ENCODE measurements at regions of chr7 and their contacts with region 1.

Region 1: DNA sequence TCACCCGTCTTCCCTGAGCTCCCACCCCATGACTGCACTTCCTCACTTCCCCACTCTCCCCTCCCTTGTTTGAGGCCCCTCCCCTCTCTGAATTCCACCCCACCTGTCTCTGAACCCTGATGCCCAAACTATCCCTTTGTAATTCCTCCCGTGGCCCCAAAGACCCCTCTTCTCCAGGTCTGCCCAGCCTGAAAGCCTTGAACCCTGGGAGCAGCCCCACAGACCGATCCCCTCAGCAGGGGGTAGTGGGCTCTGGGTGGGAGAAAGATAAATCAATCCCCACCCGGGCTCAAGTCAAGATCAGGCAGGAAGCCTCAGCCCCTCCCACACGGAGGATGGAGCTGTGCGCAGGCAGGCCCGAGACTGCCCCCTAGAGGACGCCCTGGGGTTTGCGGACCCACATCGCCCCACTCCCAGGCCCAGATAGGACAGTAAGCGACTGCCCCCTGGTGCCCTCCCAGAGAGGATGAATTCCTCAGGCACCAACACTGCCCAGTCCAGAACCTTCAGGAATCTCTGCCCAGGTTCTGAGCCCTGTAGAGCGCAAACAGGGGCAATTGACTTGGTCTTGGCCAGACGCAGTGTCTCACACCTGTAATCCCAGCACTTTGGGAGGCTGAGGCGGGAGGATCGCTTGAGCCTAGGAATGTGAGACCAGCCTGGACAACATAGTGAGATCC is 11.7 kb downstream of the HSPB1 start:
- DNase-seq: peak; percentile 94 to 97
- ATAC-seq: peak; percentile 68 to 86 (median 68)
- H3K4me3 ChIP-seq: no peak overlapping the region
- H3K4me3 Mint-ChIP-seq: peak overlapping the region; percentile 35
- H3K27ac ChIP-seq: no peak overlapping the region
- H3K27ac Mint-ChIP-seq: peak overlapping the region in 1 of 2 donors; percentile 69
- H3K4me1 ChIP-seq: peaks cover 22% of the 10 kb centered on the region
- H3K4me1 Mint-ChIP-seq: peaks cover 22 to 28% of the 10 kb centered on the region in 2 donors
- H3K27me3 ChIP-seq: no peaks in the 10 kb centered on the region
- H3K27me3 Mint-ChIP-seq: no peaks in the 10 kb centered on the region
- CTCF ChIP-seq: peak; percentile 99

Region 2: GRCh38 chr7:76047811-76048667 is 266.1 kb before region 1 on chr7 and contains the starts of genes MDH2 and STYXL1:
- intact Hi-C with region 1: loop called (anchors 10 kb)
- DNase-seq: peak; percentile 86 to 93
- ATAC-seq: peak; percentile 90 to 96 (median 93)
- H3K4me3 ChIP-seq: peak within 1 kb of the TSS; percentile 100
- H3K4me3 Mint-ChIP-seq: peak within 1 kb of the TSS; percentile 96
- H3K27ac ChIP-seq: peak within 1 kb of the TSS; percentile 94
- H3K27ac Mint-ChIP-seq: peak within 1 kb of the TSS; percentile 92 to 98
- H3K4me1 ChIP-seq: peaks cover 35% of the 10 kb centered on the region
- H3K4me1 Mint-ChIP-seq: peaks cover 31 to 58% of the 10 kb centered on the region in 2 donors
- H3K27me3 ChIP-seq: no peaks in the 10 kb centered on the region
- H3K27me3 Mint-ChIP-seq: no peaks in the 10 kb centered on the region
- CTCF ChIP-seq: no peak
- total RNA-seq, gene MDH2: 75.9 to 95.0 (median 93.9) TPM
- total RNA-seq, gene STYXL1: 15.1 to 33.2 (median 18.8) TPM

Region 3: DNA sequence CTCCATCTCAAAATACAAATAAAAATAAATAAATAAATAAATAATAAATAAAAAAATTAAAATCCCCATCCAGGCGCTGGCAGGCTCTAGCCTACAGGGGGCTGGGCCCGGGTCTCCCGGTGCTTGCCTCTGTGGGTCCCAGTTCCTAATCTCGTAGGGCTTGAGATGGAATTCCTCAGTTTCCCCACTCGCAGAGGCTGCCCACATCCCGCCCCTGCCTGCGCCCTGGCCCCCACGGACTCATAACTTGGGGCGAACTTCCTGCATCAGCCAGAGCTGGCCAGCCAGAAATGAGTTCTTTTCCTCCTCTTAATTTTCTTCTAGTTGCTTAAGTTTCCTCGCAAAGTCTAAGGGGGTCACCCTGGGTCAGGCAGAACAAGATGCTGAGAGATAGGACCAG is 134.5 kb before region 1 on chr7:
- intact Hi-C with region 1: loop called (anchors 1 kb)
- DNase-seq: no peak
- ATAC-seq: no peak
- H3K4me3 ChIP-seq: no peak overlapping the region
- H3K4me3 Mint-ChIP-seq: no peak overlapping the region
- H3K27ac ChIP-seq: no peak overlapping the region
- H3K27ac Mint-ChIP-seq: no peak overlapping the region
- H3K4me1 ChIP-seq: peaks cover 9% of the 10 kb centered on the region
- H3K4me1 Mint-ChIP-seq: peaks cover 5 to 6% of the 10 kb centered on the region in 2 donors
- H3K27me3 ChIP-seq: no peaks in the 10 kb centered on the region
- H3K27me3 Mint-ChIP-seq: no peaks in the 10 kb centered on the region
- CTCF ChIP-seq: no peak

Region 4: DNA sequence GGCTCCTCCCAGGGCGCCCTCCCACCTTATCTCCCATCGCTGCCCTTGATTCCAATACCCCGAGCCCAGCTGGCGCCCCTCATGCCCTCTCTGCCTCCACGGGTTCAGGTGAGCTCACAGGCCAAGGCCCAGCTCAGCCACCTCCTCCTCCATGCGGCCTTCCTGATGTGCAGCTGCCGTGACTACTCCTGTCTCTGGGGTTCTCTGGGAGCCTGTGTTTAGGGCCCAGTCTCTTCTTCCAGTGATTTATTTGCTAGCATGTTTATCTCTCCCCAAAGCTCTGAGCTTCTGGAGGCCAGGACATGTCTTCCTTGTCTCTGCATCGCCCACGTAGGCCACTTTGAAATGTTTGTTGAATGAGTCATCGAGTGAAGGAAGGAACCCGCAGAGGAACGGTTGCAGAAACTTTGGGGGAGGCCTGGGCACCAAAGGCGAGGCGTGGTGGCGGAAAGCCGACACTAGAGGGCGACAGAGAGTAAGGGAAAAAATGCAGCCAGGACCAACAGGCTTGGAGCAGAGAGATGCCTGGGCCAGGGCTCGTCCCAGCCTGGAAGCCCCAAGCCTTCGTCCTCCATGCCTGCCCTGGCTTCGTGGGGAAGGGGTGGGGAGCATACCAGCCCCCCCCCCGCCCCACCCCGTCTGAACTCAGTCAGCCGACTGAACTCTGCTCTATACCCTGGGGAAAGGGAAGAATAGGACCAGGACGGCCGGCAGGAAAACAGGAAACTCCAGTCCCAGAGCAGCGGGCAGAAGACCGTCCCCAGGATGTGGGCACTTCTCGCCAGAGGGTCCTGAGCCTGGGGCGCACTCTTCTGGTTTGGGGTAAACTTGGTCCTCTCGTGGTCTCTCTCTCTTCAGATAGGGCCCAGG is 22.6 kb before region 1 on chr7:
- intact Hi-C with region 1: loop called (anchors 1 kb)
- DNase-seq: peak; percentile 78 to 91
- ATAC-seq: peak; percentile 86 to 97 (median 91)
- H3K4me3 ChIP-seq: no peak overlapping the region
- H3K4me3 Mint-ChIP-seq: no peak overlapping the region
- H3K27ac ChIP-seq: no peak overlapping the region
- H3K27ac Mint-ChIP-seq: peak overlapping the region in 1 of 2 donors; percentile 73
- H3K4me1 ChIP-seq: peaks cover 9% of the 10 kb centered on the region
- H3K4me1 Mint-ChIP-seq: peaks cover 5 to 7% of the 10 kb centered on the region in 2 donors
- H3K27me3 ChIP-seq: no peaks in the 10 kb centered on the region
- H3K27me3 Mint-ChIP-seq: peaks cover 0 to 5% of the 10 kb centered on the region in 2 donors
- CTCF ChIP-seq: peak; percentile 96

Region 5: DNA sequence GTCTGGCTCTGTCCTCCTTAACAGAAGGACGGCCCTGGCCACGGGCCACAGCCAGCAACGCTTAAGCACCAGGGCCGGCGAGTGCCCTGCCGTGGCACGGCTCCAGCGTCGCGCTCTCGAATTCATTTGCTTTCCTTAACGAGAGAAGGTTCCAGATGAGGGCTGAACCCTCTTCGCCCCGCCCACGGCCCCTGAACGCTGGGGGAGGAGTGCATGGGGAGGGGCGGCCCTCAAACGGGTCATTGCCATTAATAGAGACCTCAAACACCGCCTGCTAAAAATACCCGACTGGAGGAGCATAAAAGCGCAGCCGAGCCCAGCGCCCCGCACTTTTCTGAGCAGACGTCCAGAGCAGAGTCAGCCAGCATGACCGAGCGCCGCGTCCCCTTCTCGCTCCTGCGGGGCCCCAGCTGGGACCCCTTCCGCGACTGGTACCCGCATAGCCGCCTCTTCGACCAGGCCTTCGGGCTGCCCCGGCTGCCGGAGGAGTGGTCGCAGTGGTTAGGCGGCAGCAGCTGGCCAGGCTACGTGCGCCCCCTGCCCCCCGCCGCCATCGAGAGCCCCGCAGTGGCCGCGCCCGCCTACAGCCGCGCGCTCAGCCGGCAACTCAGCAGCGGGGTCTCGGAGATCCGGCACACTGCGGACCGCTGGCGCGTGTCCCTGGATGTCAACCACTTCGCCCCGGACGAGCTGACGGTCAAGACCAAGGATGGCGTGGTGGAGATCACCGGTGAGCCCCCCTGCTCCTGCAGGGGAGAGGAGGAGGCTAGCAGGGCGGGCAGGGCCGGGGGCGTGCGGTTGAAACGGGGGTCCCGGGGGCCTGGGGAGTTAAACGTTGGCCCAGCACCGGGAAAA is 11.6 kb before region 1 on chr7 and contains the start of gene HSPB1:
- intact Hi-C with region 1: loop called (anchors 1 kb)
- DNase-seq: peak; percentile 43 to 80
- ATAC-seq: peak; percentile 74 to 82 (median 81)
- H3K4me3 ChIP-seq: peak within 1 kb of the TSS; percentile 72
- H3K4me3 Mint-ChIP-seq: peak within 1 kb of the TSS; percentile 88
- H3K27ac ChIP-seq: peak within 1 kb of the TSS; percentile 28
- H3K27ac Mint-ChIP-seq: peak within 1 kb of the TSS; percentile 65 to 80
- H3K4me1 ChIP-seq: peaks cover 25% of the 10 kb centered on the region
- H3K4me1 Mint-ChIP-seq: peaks cover 5 to 21% of the 10 kb centered on the region in 2 donors
- H3K27me3 ChIP-seq: no peaks in the 10 kb centered on the region
- H3K27me3 Mint-ChIP-seq: peaks cover 0 to 2% of the 10 kb centered on the region in 2 donors
- CTCF ChIP-seq: no peak
- total RNA-seq, gene HSPB1: 14.4 to 15.9 (median 14.7) TPM

Region 6: DNA sequence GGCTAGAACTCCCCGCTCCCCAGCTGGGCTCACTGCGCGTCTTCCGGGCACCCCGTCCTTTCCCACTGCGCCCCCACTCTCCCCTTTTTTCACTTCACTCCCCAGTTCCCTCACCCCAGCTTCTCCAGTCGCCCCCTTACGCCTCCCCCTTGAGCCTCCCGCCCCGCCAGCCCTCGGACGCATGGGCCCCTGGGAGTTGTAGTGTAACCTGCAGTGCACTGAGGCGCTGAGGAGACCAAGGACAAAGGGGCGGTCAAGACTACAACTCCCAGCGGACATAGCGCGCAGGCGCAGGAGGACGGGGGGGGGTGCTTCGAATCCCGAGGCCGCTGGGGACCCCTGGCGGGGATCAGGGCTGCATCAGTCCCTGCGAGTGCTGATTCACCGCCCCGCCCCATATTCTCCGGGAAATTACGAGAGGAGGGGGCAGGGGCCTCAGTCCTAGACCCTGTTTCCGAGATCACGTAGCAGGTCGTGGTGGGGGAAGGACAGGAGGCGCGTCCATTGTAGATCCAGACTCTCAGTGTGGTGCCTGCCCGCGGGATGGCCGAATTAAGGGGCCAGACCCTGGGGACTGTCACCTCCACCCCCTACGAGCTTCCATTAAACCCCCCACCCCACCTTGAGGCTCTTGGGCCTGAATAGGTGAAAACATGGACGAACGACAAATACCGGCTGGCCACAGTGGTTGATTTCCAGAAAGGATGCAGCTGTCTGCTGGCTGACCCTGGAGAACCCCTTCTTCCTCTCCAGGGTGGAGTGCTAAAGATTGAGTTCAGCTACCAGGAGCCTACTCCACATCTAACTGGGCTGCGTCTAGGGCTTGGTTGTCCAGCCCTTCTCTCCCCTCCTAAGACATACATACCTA is 45.2 kb after region 1 on chr7:
- intact Hi-C with region 1: loop called (anchors 1 kb)
- DNase-seq: peak; percentile 91 to 98
- ATAC-seq: peak; percentile 91 to 97 (median 92)
- H3K4me3 ChIP-seq: peak overlapping the region; percentile 97
- H3K4me3 Mint-ChIP-seq: peak overlapping the region; percentile 86
- H3K27ac ChIP-seq: peak overlapping the region; percentile 99
- H3K27ac Mint-ChIP-seq: peak overlapping the region; percentile 92 to 99
- H3K4me1 ChIP-seq: peaks cover 10% of the 10 kb centered on the region
- H3K4me1 Mint-ChIP-seq: peaks cover 29 to 32% of the 10 kb centered on the region in 2 donors
- H3K27me3 ChIP-seq: no peaks in the 10 kb centered on the region
- H3K27me3 Mint-ChIP-seq: no peaks in the 10 kb centered on the region
- CTCF ChIP-seq: peak; percentile 63

Region 7: DNA sequence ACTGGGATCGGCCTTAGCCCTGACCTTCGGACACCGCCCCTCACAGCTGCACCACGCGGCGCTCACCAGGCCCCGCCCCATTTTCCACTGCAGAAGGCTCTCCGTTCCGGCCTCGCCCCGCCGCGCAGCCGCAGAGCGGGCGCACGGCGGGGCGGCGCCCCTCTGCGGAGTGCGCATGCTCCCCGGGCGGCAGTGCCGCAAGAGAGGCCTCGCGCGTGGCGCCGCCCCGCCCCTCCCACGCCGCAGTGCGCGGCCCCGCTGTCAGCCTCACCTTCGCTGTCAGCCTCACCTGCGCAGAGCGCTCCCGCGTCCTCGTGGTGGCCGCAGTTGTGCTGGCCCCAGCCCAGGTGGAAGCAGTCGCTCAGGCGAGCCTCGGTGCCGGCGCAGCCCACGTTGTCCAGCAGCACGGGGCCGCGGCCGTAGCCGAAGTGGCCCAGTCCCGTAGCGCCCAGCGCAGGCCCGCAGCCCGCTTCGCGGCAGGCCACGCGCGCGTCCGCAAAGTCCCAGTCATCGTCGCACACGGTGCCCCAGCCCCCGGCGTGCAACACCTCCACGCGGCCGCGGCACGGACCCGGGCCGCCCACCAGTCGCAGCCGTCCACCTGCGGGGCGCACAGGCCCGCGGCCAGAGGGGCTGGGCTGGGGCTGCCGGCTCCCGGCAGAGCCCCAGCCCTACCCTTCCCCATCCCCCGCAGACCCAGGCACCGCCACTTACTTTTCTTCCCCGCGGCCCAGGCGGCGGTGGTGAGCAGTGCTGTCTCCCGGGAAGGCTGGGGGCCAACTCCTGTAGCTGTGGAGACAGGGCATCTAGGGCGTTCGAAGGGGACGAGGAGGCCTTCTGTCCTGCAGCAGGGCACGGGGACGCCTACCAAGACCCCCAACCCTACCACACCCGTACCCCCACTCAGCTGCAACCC is 79.2 kb after region 1 on chr7:
- intact Hi-C with region 1: no loop called
- DNase-seq: peak; percentile 81 to 97
- ATAC-seq: peak; percentile 79 to 89 (median 80)
- H3K4me3 ChIP-seq: peak overlapping the region; percentile 49
- H3K4me3 Mint-ChIP-seq: peak overlapping the region; percentile 85
- H3K27ac ChIP-seq: peak overlapping the region; percentile 37
- H3K27ac Mint-ChIP-seq: peak overlapping the region; percentile 50 to 81
- H3K4me1 ChIP-seq: peaks cover 31% of the 10 kb centered on the region
- H3K4me1 Mint-ChIP-seq: peaks cover 12 to 22% of the 10 kb centered on the region in 2 donors
- H3K27me3 ChIP-seq: no peaks in the 10 kb centered on the region
- H3K27me3 Mint-ChIP-seq: no peaks in the 10 kb centered on the region
- CTCF ChIP-seq: no peak

Region 8: GRCh38 chr7:76424721-76425511 is 110.7 kb after region 1 on chr7 and contains the start of gene ZP3:
- intact Hi-C with region 1: no loop called
- DNase-seq: peak in 1 of 2 donors; percentile 34
- ATAC-seq: peak; percentile 40 to 65 (median 57)
- H3K4me3 ChIP-seq: no peak within 1 kb of the TSS
- H3K4me3 Mint-ChIP-seq: no peak within 1 kb of the TSS
- H3K27ac ChIP-seq: no peak within 1 kb of the TSS
- H3K27ac Mint-ChIP-seq: peak within 1 kb of the TSS in 1 of 2 donors; percentile 18
- H3K4me1 ChIP-seq: peaks cover 11% of the 10 kb centered on the region
- H3K4me1 Mint-ChIP-seq: peaks cover 0 to 4% of the 10 kb centered on the region in 2 donors
- H3K27me3 ChIP-seq: no peaks in the 10 kb centered on the region
- H3K27me3 Mint-ChIP-seq: peaks cover 4 to 6% of the 10 kb centered on the region in 2 donors
- CTCF ChIP-seq: no peak
- total RNA-seq, gene ZP3: 1.9 to 12.9 (median 6.1) TPM